Transverse colon (tissue), 4 donors: ENCODE measurements at regions of chr9 and their contacts with region 1.

Region 1: GRCh38 chr9:98851730-98852459 is 44.4 kb downstream of the GALNT12 start:
- DNase-seq: no peak
- H3K4me3 ChIP-seq: no peak overlapping the region
- H3K27ac ChIP-seq: no peak overlapping the region
- H3K4me1 ChIP-seq: peaks cover 0 to 18% (median 12%) of the 10 kb centered on the region in 4 donors
- H3K27me3 ChIP-seq: no peaks in the 10 kb centered on the region
- CTCF ChIP-seq: no peak
- EP300 ChIP-seq: no peak
- POLR2A ChIP-seq: no peak

Region 2: DNA sequence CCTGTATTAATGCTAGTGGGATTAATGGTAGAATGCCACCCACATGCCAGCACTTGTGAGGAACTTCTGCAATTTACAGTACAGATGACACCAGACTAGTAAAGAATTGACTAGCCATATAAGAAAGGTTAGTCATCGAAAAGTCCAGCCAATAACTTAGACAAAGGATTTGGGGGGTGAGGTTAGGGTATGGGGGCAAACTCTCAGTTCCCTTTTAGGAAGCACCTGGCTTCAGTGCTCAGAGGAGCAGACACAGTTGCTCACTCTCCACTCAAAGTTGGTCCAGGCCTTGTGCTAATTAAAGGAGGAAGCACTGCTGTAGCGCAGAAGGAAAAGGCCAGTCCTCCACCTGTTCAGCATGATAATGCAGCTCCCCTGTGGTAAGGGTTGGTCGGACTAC is 278.2 kb after region 1 on chr9:
- in situ Hi-C with region 1: loop called in 3 of 4 experiments (anchors 10 to 25 kb)
- intact Hi-C with region 1: no loop called
- DNase-seq: no peak
- H3K4me3 ChIP-seq: no peak overlapping the region
- H3K27ac ChIP-seq: no peak overlapping the region
- H3K4me1 ChIP-seq: peaks cover 0 to 20% (median 5%) of the 10 kb centered on the region in 4 donors
- H3K27me3 ChIP-seq: no peaks in the 10 kb centered on the region
- CTCF ChIP-seq: no peak
- EP300 ChIP-seq: no peak
- POLR2A ChIP-seq: no peak